Heart right ventricle (tissue), 16 donors: ENCODE measurements at regions of chr12 and their contacts with region 1.

Region 1: GRCh38 chr12:82130762-82131161 is 227.4 kb downstream of the CCDC59 start:
- DNase-seq: no peak
- ATAC-seq: no peak
- H3K4me3 ChIP-seq: no peak overlapping the region
- H3K27ac ChIP-seq: no peak overlapping the region
- H3K4me1 ChIP-seq: no peaks in the 10 kb centered on the region
- H3K27me3 ChIP-seq: no peaks in the 10 kb centered on the region
- CTCF ChIP-seq: no peak

Region 2: GRCh38 chr12:81722004-81722403 is 408.8 kb before region 1 on chr12:
- intact Hi-C with region 1: no loop called
- DNase-seq: no peak
- ATAC-seq: no peak
- H3K4me3 ChIP-seq: no peak overlapping the region
- H3K27ac ChIP-seq: no peak overlapping the region
- H3K4me1 ChIP-seq: no peaks in the 10 kb centered on the region
- H3K27me3 ChIP-seq: no peaks in the 10 kb centered on the region
- CTCF ChIP-seq: no peak

Region 3: GRCh38 chr12:81930037-81930436 is 200.7 kb before region 1 on chr12:
- intact Hi-C with region 1: loop called in 1 of 10 experiments (anchors 5 kb)
- DNase-seq: no peak
- ATAC-seq: no peak
- H3K4me3 ChIP-seq: no peak overlapping the region
- H3K27ac ChIP-seq: no peak overlapping the region
- H3K4me1 ChIP-seq: no peaks in the 10 kb centered on the region
- H3K27me3 ChIP-seq: no peaks in the 10 kb centered on the region
- CTCF ChIP-seq: no peak

Region 4: GRCh38 chr12:82144505-82144904 is 13.7 kb after region 1 on chr12:
- intact Hi-C with region 1: no loop called
- DNase-seq: no peak
- ATAC-seq: no peak
- H3K4me3 ChIP-seq: no peak overlapping the region
- H3K27ac ChIP-seq: no peak overlapping the region
- H3K4me1 ChIP-seq: no peaks in the 10 kb centered on the region
- H3K27me3 ChIP-seq: no peaks in the 10 kb centered on the region
- CTCF ChIP-seq: no peak